WTC11 (cell line): ENCODE measurements at regions of chr11 and their contacts with region 1.

Region 1: DNA sequence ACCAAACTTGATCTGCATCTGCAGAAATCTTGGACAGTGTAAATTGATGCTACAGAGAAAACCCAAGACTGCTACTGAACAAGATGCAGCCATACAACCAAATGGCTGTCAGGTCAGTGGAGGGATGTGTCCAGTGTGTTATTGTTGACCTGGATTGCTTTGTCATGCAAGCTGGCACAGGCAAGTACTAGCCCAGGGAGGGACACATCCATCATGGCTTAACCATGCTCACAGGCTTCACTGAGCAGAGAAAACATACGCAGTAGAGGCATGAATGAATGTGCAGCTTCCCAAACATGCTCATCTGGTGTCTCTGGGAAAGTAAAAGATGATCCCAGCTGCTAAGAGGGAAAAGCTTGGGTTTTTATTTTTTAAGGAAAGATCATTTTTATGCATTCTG is 93.6 kb downstream of the MTNR1B start:
- DNase-seq: no peak
- ATAC-seq: no peak
- H3K4me3 Mint-ChIP-seq: no peak overlapping the region
- H3K27ac Mint-ChIP-seq: no peak overlapping the region
- H3K4me1 Mint-ChIP-seq: peaks cover 16% of the 10 kb centered on the region
- H3K27me3 Mint-ChIP-seq: no peaks in the 10 kb centered on the region; the same call in 1 of the 2 replicates
- CTCF ChIP-seq: no peak

Region 2: GRCh38 chr11:93113824-93114223 is 50.7 kb after region 1 on chr11:
- CTCF ChIA-PET with region 1: interaction called, 10 read pairs
- POLR2A ChIA-PET with region 1: no interaction called
- DNase-seq: peak; percentile 17
- ATAC-seq: peak; percentile 61
- H3K4me3 Mint-ChIP-seq: no peak overlapping the region
- H3K27ac Mint-ChIP-seq: peak overlapping the region; percentile 24; the same call in 1 of the 2 replicates
- H3K4me1 Mint-ChIP-seq: peaks cover 70% of the 10 kb centered on the region
- H3K27me3 Mint-ChIP-seq: peaks cover 2% of the 10 kb centered on the region; the same call in 1 of the 2 replicates
- CTCF ChIP-seq: no peak